B cell (primary cell): ENCODE measurements at regions of chr17 and their contacts with region 1.

Region 1: DNA sequence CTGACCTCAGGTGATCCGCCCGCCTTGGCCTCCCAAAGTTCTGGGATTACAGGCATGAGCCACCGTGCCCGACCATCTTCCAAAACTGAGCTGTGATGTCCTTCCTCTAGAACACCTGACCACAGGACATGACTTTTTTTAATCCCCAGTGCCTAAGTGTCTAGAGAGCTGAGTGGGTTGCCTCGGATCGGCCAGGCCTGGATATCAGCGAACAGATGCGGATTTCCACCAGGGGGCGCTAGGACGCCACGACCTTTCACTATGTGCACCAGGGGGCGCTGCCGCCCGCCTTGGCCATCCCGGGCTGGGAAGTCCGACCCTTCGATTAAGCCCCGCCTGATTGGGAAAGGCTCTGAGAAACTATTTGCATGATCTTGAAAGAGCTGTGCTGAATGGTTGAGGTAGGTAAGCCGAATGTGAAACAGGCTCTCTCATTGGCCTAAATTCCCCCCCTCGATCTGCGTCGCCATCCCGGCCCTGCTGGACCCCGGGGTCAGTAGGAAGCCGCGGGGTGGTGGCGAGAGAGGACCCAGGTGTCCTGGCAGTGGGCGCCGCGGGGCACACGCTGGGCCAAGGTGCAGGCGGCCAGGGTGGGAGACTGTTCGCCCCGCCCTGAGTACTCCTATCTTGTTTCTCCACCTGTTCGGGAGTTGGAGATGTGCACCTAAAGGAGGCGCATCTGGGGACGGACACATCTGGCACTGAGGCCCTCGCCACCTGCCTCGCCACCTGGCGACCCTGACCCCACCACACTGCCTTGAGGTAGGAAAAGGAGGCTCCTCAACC is at the start of gene ACBD4:
- DNase-seq: peak; percentile 98
- ATAC-seq: peak; percentile 83
- H3K4me3 ChIP-seq: peak within 1 kb of the TSS; percentile 35 to 96 (median 90)
- H3K4me3 Mint-ChIP-seq: peak within 1 kb of the TSS; percentile 95
- H3K27ac ChIP-seq: peak within 1 kb of the TSS; percentile 54 to 76
- H3K27ac Mint-ChIP-seq: peak within 1 kb of the TSS; percentile 87
- H3K4me1 ChIP-seq: peaks cover 17 to 24% of the 10 kb centered on the region in 2 donors
- H3K4me1 Mint-ChIP-seq: peaks cover 20% of the 10 kb centered on the region
- H3K27me3 ChIP-seq: peaks cover 0 to 10% (median 0%) of the 10 kb centered on the region in 4 experiments
- H3K27me3 Mint-ChIP-seq: peaks cover 4% of the 10 kb centered on the region
- CTCF ChIP-seq: peak; percentile 100
- total RNA-seq, gene ACBD4: 39.4 and 43.6 TPM in 2 replicates

Region 2: DNA sequence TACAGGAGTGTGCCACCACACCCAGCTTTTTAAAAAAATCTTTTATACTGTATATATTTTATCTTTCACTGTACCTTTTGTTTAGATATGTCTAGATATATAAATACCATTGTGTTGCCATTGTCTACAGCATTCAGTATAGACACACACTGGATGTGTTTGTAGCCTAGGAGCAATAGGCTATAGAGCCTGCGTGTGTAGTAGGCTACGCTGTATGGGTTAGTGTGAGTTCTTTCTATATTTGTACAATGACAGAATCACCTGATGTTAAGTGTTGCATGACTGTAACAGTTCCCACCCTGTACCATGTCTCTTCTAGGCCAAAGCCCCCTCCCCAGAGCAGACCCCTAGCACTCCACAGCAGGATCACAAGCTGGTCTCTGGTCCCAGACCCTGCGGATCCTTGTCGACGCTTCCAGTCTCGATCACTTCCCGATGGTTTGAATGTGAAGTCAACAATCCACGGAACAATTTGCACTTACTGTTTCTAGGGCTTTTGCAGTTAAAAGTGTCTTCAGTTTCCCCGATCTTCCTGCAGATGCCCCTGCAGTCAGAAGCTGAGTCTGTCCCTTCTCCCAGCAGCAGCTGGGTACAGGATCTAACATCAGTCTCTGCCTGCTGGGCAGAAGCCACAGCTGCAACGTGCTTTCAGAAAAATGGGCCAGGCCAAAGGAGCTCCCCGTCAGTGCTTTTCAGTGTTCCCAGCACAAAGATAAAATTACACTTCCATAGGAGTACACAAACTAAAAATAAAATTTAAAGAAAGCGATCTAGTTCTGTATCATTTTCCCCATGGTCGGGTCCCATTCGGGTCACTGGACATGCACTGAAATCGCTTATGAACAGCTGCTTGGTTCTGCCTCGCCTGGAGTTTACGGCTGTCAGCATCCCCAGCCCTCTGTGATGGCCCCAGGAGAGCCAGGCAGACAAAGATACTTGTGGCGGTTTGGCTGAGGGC is 341.2 kb before region 1 on chr17:
- CTCF ChIA-PET with region 1: no interaction called
- POLR2A ChIA-PET with region 1: no interaction called
- intact Hi-C with region 1: no loop called
- DNase-seq: no peak
- ATAC-seq: no peak
- H3K4me3 ChIP-seq: no peak overlapping the region
- H3K4me3 Mint-ChIP-seq: no peak overlapping the region
- H3K27ac ChIP-seq: no peak overlapping the region
- H3K27ac Mint-ChIP-seq: no peak overlapping the region
- H3K4me1 ChIP-seq: no peaks in the 10 kb centered on the region
- H3K4me1 Mint-ChIP-seq: no peaks in the 10 kb centered on the region
- H3K27me3 ChIP-seq: no peaks in the 10 kb centered on the region
- H3K27me3 Mint-ChIP-seq: peaks cover 2% of the 10 kb centered on the region
- CTCF ChIP-seq: no peak

Region 3: GRCh38 chr17:44919885-44920564 is 215.4 kb before region 1 on chr17:
- CTCF ChIA-PET with region 1: interaction called, 8 read pairs
- POLR2A ChIA-PET with region 1: no interaction called
- intact Hi-C with region 1: loop called (anchors 1 kb)
- DNase-seq: peak; percentile 73
- ATAC-seq: peak; percentile 88
- H3K4me3 ChIP-seq: no peak overlapping the region
- H3K4me3 Mint-ChIP-seq: no peak overlapping the region
- H3K27ac ChIP-seq: no peak overlapping the region
- H3K27ac Mint-ChIP-seq: no peak overlapping the region
- H3K4me1 ChIP-seq: peaks cover 10 to 13% of the 10 kb centered on the region in 2 donors
- H3K4me1 Mint-ChIP-seq: peaks cover 12% of the 10 kb centered on the region
- H3K27me3 ChIP-seq: peaks cover 0 to 33% (median 6%) of the 10 kb centered on the region in 4 experiments
- H3K27me3 Mint-ChIP-seq: peaks cover 8% of the 10 kb centered on the region
- CTCF ChIP-seq: peak; percentile 61

Region 4: DNA sequence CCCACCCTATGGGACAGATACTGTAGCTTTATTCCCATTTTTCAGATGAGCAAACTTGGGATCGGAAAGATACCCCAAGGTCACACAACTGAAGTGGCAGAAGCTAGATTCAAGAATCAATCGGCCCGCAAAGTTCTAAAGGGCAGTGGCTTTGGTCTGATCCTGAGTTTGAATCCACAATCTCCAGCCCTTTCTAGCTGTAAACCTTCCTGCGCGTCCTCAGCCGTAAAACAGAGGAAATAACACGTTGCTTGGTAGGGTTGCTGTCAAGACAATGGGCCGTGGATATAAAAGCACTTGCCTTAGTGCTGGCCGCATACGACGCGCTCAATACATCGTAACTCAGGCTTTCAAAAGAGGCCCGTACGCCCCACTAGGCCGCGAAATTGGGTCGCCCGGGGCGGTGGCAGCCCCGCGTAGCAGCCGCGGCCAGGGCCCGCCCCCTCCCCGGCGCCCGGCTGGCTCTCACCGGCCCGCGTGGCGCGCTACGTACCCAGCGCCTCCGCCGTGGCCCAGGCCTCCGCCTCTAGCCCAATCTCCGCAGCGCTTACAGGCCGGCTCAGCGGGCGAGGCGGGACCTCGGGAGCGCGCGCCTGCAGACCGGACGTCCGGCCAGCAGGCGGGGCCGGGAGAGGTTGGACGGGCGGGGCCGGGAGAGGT is 84.2 kb before region 1 on chr17 and contains the start of gene DCAKD:
- CTCF ChIA-PET with region 1: no interaction called
- POLR2A ChIA-PET with region 1: no interaction called
- intact Hi-C with region 1: no loop called
- DNase-seq: peak; percentile 94
- ATAC-seq: peak; percentile 99
- H3K4me3 ChIP-seq: peak within 1 kb of the TSS; percentile 55 to 83 (median 73)
- H3K4me3 Mint-ChIP-seq: peak within 1 kb of the TSS; percentile 89
- H3K27ac ChIP-seq: peak within 1 kb of the TSS; percentile 77 to 92
- H3K27ac Mint-ChIP-seq: peak within 1 kb of the TSS; percentile 90
- H3K4me1 ChIP-seq: peaks cover 7 to 19% of the 10 kb centered on the region in 2 donors
- H3K4me1 Mint-ChIP-seq: peaks cover 20% of the 10 kb centered on the region
- H3K27me3 ChIP-seq: no peaks in the 10 kb centered on the region
- H3K27me3 Mint-ChIP-seq: no peaks in the 10 kb centered on the region
- CTCF ChIP-seq: no peak
- total RNA-seq, gene DCAKD: 20.6 and 22.9 TPM in 2 replicates

Region 5: GRCh38 chr17:45098869-45099616 is 36.3 kb before region 1 on chr17:
- CTCF ChIA-PET with region 1: interaction called, 13 read pairs
- POLR2A ChIA-PET with region 1: no interaction called
- intact Hi-C with region 1: loop called (anchors 2 kb)
- DNase-seq: peak; percentile 78
- ATAC-seq: peak; percentile 84
- H3K4me3 ChIP-seq: no peak overlapping the region
- H3K4me3 Mint-ChIP-seq: no peak overlapping the region
- H3K27ac ChIP-seq: no peak overlapping the region
- H3K27ac Mint-ChIP-seq: peak overlapping the region; percentile 6
- H3K4me1 ChIP-seq: no peaks in the 10 kb centered on the region
- H3K4me1 Mint-ChIP-seq: peaks cover 7% of the 10 kb centered on the region
- H3K27me3 ChIP-seq: no peaks in the 10 kb centered on the region
- H3K27me3 Mint-ChIP-seq: no peaks in the 10 kb centered on the region
- CTCF ChIP-seq: peak; percentile 88

Region 6: GRCh38 chr17:45161019-45161825 is 25.8 kb after region 1 on chr17:
- CTCF ChIA-PET with region 1: interaction called, 100 read pairs
- POLR2A ChIA-PET with region 1: interaction called, 15 read pairs
- intact Hi-C with region 1: loop called (anchors 1 kb)
- DNase-seq: peak; percentile 100
- ATAC-seq: peak; percentile 93
- H3K4me3 ChIP-seq: peak overlapping the region; percentile 64 to 98 (median 92)
- H3K4me3 Mint-ChIP-seq: peak overlapping the region; percentile 95
- H3K27ac ChIP-seq: peak overlapping the region; percentile 98
- H3K27ac Mint-ChIP-seq: peak overlapping the region; percentile 97
- H3K4me1 ChIP-seq: peaks cover 19 to 28% of the 10 kb centered on the region in 2 donors
- H3K4me1 Mint-ChIP-seq: peaks cover 37% of the 10 kb centered on the region
- H3K27me3 ChIP-seq: no peaks in the 10 kb centered on the region
- H3K27me3 Mint-ChIP-seq: no peaks in the 10 kb centered on the region
- CTCF ChIP-seq: no peak

Region 7: GRCh38 chr17:45218895-45219661 is 83.7 kb after region 1 on chr17:
- CTCF ChIA-PET with region 1: interaction called, 30 read pairs
- POLR2A ChIA-PET with region 1: interaction called, 3 read pairs
- intact Hi-C with region 1: no loop called
- DNase-seq: peak; percentile 88
- ATAC-seq: peak; percentile 28
- H3K4me3 ChIP-seq: no peak overlapping the region
- H3K4me3 Mint-ChIP-seq: peak overlapping the region; percentile 86
- H3K27ac ChIP-seq: no peak overlapping the region
- H3K27ac Mint-ChIP-seq: peak overlapping the region; percentile 82
- H3K4me1 ChIP-seq: peaks cover 19 to 37% of the 10 kb centered on the region in 2 donors
- H3K4me1 Mint-ChIP-seq: peaks cover 33% of the 10 kb centered on the region
- H3K27me3 ChIP-seq: no peaks in the 10 kb centered on the region
- H3K27me3 Mint-ChIP-seq: no peaks in the 10 kb centered on the region
- CTCF ChIP-seq: peak; percentile 93

Region 8: DNA sequence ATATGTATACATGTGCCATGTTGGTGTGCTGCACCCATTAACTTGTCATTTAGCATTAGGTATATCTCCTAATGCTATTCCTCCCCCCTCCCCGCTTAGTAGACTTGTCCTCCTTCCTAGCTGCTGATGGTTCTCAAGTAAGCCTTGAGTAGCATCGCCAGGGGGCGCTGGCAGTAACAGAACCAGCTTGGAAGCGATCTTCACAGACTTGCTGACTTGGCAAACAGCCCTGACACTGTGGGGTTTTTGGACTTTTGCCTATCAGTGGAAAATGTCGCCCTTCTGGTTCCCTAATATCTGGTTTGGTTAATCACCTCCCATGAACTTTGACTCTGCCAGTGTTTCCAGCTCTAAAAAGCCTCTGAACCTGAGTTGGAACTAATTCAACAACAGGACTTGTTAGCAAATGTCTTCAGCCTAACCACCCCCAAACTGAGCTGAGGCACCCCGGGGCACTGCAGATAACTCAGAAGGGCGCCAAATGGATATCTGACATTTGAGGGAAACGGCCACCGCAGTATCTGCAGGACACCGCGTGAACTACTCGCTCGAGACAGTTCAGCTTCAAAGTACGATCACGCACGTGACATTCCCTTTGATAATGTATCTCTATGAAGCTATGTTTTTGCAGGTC is 141.9 kb after region 1 on chr17:
- CTCF ChIA-PET with region 1: interaction called, 13 read pairs
- POLR2A ChIA-PET with region 1: no interaction called
- intact Hi-C with region 1: no loop called
- DNase-seq: peak; percentile 91
- ATAC-seq: peak; percentile 94
- H3K4me3 ChIP-seq: no peak overlapping the region
- H3K4me3 Mint-ChIP-seq: no peak overlapping the region
- H3K27ac ChIP-seq: peak overlapping the region in 1 of 2 donors; percentile 48
- H3K27ac Mint-ChIP-seq: no peak overlapping the region
- H3K4me1 ChIP-seq: peaks cover 4 to 5% of the 10 kb centered on the region in 2 donors
- H3K4me1 Mint-ChIP-seq: peaks cover 6% of the 10 kb centered on the region
- H3K27me3 ChIP-seq: no peaks in the 10 kb centered on the region
- H3K27me3 Mint-ChIP-seq: no peaks in the 10 kb centered on the region
- CTCF ChIP-seq: peak; percentile 77

Region 9: GRCh38 chr17:46115699-46116098 is 980.3 kb after region 1 on chr17:
- CTCF ChIA-PET with region 1: no interaction called
- POLR2A ChIA-PET with region 1: no interaction called
- intact Hi-C with region 1: no loop called
- DNase-seq: no peak
- ATAC-seq: no peak
- H3K4me3 ChIP-seq: no peak overlapping the region
- H3K4me3 Mint-ChIP-seq: no peak overlapping the region
- H3K27ac ChIP-seq: no peak overlapping the region
- H3K27ac Mint-ChIP-seq: no peak overlapping the region
- H3K4me1 ChIP-seq: peaks cover under 1 to 8% of the 10 kb centered on the region in 2 donors
- H3K4me1 Mint-ChIP-seq: peaks cover 65% of the 10 kb centered on the region
- H3K27me3 ChIP-seq: no peaks in the 10 kb centered on the region
- H3K27me3 Mint-ChIP-seq: no peaks in the 10 kb centered on the region
- CTCF ChIP-seq: no peak